SK-N-SH (cell line): ENCODE measurements at regions of chr3 and their contacts with region 1.

Region 1: GRCh38 chr3:142828703-142829305 is 60.1 kb downstream of the PCOLCE2 start:
- DNase-seq: peak; percentile 64
- H3K4me3 ChIP-seq: peak overlapping the region in 1 of 2 experiments; percentile 38; a peak in 1 of 4 replicates
- H3K27ac ChIP-seq: no peak overlapping the region
- H3K4me1 ChIP-seq: no peaks in the 10 kb centered on the region
- H3K27me3 ChIP-seq: no peaks in the 10 kb centered on the region
- CTCF ChIP-seq: peak; percentile 93
- EP300 ChIP-seq: no peak
- RAD21 ChIP-seq: peak; percentile 97

Region 2: DNA sequence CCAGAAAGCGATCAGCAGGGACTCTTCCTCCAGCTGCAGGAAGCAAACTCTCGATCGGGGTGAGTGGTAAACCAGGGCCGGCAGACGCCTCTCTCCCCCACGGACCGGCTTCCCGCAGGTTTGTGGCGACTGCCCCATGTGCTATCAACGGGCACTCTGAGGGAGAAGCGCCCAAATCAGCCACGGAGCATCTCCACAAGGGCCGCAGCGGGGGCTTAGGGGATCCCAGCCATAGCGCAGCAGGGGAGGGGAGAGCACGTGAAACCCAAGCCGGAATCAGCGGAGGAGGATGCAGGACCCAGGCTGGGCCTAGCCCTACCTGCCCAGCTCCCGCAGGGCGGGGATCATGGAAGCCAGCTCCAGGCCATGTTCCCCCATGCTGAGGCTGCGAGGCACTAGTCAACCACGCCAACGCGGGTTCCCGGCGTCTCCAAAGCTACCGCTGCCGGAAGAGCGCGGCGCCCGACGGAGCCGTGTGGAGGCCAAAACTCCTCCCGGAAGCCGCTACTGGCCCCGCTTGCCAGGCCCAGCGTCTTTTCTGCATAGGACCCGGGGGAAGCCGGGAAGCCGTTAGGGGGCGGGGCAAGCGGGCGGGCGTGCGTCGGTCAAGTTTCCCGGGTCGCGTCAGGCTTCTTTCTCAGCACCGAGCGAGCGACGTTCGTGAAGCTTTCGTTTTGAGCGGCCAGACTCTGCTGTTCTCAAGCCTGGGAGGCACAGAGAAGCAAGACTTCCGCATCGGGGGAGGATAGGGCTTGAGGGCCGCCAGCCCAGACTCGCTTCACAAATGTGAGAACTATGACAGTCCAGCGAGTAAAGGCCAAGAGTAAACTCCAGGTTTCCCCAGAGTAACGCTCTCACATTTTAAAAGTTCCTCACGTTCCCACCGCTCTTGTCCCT is 250.2 kb before region 1 on chr3 and contains the start of gene ATR:
- CTCF ChIA-PET with region 1: interaction called, 15 read pairs
- POLR2A ChIA-PET with region 1: no interaction called
- DNase-seq: peak; percentile 94
- H3K4me3 ChIP-seq: peak within 1 kb of the TSS; percentile 91 to 97
- H3K27ac ChIP-seq: peak within 1 kb of the TSS; percentile 92 to 93
- H3K4me1 ChIP-seq: peaks cover 4 to 7% of the 10 kb centered on the region in 2 experiments; a peak in 3 of 4 replicates
- H3K27me3 ChIP-seq: no peaks in the 10 kb centered on the region
- CTCF ChIP-seq: no peak
- EP300 ChIP-seq: peak in 1 of 2 experiments; percentile 62; a peak in 1 of 4 replicates
- RAD21 ChIP-seq: no peak
- polyA plus RNA-seq, gene ATR: 7.3 and 13.2 TPM in 2 replicates

Region 3: GRCh38 chr3:142808103-142808917 is 20.5 kb before region 1 on chr3:
- CTCF ChIA-PET with region 1: interaction called, 19 read pairs
- POLR2A ChIA-PET with region 1: no interaction called
- DNase-seq: no peak
- H3K4me3 ChIP-seq: no peak overlapping the region
- H3K27ac ChIP-seq: peak overlapping the region in 1 of 2 experiments; percentile 66; a peak in 2 of 4 replicates
- H3K4me1 ChIP-seq: no peaks in the 10 kb centered on the region
- H3K27me3 ChIP-seq: no peaks in the 10 kb centered on the region
- CTCF ChIP-seq: no peak
- EP300 ChIP-seq: no peak
- RAD21 ChIP-seq: no peak

Region 4: GRCh38 chr3:142844339-142844977 is 15.7 kb after region 1 on chr3:
- CTCF ChIA-PET with region 1: interaction called, 23 read pairs
- POLR2A ChIA-PET with region 1: no interaction called
- DNase-seq: peak; percentile 25
- H3K4me3 ChIP-seq: no peak overlapping the region
- H3K27ac ChIP-seq: no peak overlapping the region
- H3K4me1 ChIP-seq: no peaks in the 10 kb centered on the region
- H3K27me3 ChIP-seq: no peaks in the 10 kb centered on the region
- CTCF ChIP-seq: peak; percentile 54
- EP300 ChIP-seq: no peak
- RAD21 ChIP-seq: peak; percentile 44

Region 5: DNA sequence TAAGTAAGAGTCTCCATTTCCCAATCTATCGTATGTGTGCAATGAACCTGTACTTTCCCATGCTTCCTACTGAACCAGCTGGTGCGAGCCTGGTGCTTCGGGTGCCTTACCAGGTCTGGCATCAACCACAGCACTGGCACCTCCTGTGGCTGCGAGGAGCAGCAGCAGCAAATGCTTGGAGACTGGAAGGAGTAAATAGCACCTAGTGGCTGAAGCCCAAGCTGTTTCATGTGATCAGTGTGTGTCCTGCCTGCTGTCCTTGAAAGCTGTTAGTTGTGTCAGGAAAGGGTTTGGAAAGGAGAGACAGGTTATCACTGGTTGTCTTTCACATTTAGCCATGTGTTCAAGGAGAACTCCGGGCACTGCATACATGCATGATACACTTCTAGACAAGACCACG is 28.3 kb after region 1 on chr3:
- CTCF ChIA-PET with region 1: interaction called, 16 read pairs
- POLR2A ChIA-PET with region 1: no interaction called
- DNase-seq: peak; percentile 65
- H3K4me3 ChIP-seq: no peak overlapping the region
- H3K27ac ChIP-seq: no peak overlapping the region
- H3K4me1 ChIP-seq: peaks cover 2 to 15% of the 10 kb centered on the region in 2 experiments; a peak in 3 of 4 replicates
- H3K27me3 ChIP-seq: no peaks in the 10 kb centered on the region
- CTCF ChIP-seq: peak; percentile 59
- EP300 ChIP-seq: no peak
- RAD21 ChIP-seq: peak; percentile 53

Region 6: GRCh38 chr3:142904639-142905436 is 76.0 kb after region 1 on chr3:
- CTCF ChIA-PET with region 1: interaction called, 18 read pairs
- POLR2A ChIA-PET with region 1: no interaction called
- DNase-seq: no peak
- H3K4me3 ChIP-seq: no peak overlapping the region
- H3K27ac ChIP-seq: no peak overlapping the region
- H3K4me1 ChIP-seq: peaks cover 0 to 6% of the 10 kb centered on the region in 2 experiments; a peak in 1 of 4 replicates
- H3K27me3 ChIP-seq: no peaks in the 10 kb centered on the region
- CTCF ChIP-seq: peak; percentile 40
- EP300 ChIP-seq: no peak
- RAD21 ChIP-seq: peak; percentile 44

Region 7: GRCh38 chr3:142931222-142931621 is 102.4 kb after region 1 on chr3:
- CTCF ChIA-PET with region 1: no interaction called
- POLR2A ChIA-PET with region 1: no interaction called
- DNase-seq: peak; percentile 44
- H3K4me3 ChIP-seq: no peak overlapping the region
- H3K27ac ChIP-seq: no peak overlapping the region
- H3K4me1 ChIP-seq: no peaks in the 10 kb centered on the region
- H3K27me3 ChIP-seq: no peaks in the 10 kb centered on the region
- CTCF ChIP-seq: peak; percentile 27; the same call in 1 of the 2 replicates
- EP300 ChIP-seq: no peak
- RAD21 ChIP-seq: no peak

Region 8: DNA sequence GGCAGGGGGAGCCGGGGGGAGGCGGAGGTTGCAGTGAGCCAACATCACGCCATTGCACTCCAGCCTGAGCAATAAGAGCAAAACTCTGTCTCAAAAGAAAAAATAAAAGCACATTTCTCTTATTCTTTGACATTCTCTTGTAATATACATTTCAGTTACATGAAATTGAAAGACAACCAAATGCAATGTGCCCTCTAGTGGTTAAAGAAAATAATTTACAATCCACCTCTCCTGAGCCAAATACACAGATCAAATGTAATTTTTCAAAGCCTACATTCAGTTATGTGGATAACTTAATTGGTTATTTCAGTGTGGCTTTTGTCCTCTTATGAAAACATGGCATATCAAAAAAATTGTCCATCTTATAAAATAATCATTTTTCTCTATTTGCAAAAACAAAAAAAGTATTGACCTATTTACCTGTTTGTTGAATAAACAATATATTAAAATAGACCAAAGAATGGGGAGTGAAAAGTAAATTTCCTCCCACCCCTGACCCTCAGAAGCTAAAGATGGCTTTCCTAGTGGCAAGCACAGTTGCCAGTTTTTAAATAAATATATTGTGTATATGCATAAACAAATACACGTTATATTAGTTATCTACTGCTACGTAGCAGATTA is 158.4 kb after region 1 on chr3:
- CTCF ChIA-PET with region 1: interaction called, 88 read pairs
- POLR2A ChIA-PET with region 1: no interaction called
- DNase-seq: peak; percentile 52
- H3K4me3 ChIP-seq: no peak overlapping the region
- H3K27ac ChIP-seq: no peak overlapping the region
- H3K4me1 ChIP-seq: 0 out of 4 replicates have a peak, but pooled peaks cover 0 to 2% of the 10 kb centered on the region in 2 experiments
- H3K27me3 ChIP-seq: no peaks in the 10 kb centered on the region
- CTCF ChIP-seq: peak; percentile 84
- EP300 ChIP-seq: no peak
- RAD21 ChIP-seq: peak; percentile 74

Region 9: DNA sequence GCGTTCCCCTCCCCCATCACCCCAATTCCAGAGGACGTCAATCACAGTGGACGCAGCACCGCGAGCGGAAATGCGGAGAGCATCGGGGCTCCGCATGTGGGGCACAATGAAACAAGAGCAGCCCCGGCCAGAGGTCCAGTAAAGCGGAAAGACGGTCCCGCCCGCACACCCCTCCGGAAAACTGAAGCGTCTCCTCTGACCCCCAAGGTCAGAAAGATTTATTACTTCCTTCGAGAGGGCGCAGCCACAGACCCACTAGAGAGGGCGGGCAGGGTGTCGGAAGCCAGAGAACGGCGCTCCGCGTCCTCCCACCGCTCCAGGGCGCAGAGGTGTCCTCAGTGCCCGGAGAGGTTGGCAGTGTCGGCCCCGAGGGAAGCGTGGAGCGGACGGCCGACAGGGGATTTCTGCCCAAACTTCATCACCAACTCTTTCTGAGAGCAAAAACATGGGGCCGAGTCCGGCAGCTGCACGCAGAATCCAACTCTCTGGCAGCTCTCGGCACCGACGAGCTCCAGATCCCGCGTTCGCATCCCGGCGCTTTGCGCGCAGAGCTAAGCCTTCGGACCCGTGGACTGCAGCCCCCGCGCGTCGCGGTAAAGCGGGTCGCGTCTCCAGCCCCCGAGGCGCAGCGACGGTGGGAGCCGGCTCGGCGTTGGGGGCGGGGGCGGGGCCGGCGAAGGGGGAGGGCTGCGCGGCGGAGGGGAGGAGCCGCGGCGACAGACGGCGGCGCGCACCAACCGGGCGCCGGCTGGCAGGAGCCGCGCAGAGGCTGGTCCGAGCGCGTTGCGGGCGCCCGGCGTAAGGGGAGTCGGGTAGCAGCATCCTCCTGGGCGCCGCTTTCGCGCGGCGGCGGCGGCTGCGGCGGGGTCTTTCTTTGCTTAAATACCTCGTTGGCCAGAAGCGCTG is 290.5 kb after region 1 on chr3 and contains the start of gene CHST2:
- CTCF ChIA-PET with region 1: no interaction called
- POLR2A ChIA-PET with region 1: no interaction called
- DNase-seq: peak; percentile 94
- H3K4me3 ChIP-seq: peak within 1 kb of the TSS; percentile 61 to 99
- H3K27ac ChIP-seq: peak within 1 kb of the TSS in 1 of 2 experiments; percentile 66; a peak in 2 of 4 replicates
- H3K4me1 ChIP-seq: peaks cover 0 to 3% of the 10 kb centered on the region in 2 experiments; a peak in 1 of 4 replicates
- H3K27me3 ChIP-seq: peaks cover 34% of the 10 kb centered on the region; the same call in 1 of the 2 replicates
- CTCF ChIP-seq: no peak
- EP300 ChIP-seq: no peak
- RAD21 ChIP-seq: no peak
- polyA plus RNA-seq, gene CHST2: 1.1 and 1.6 TPM in 2 replicates

Region 10: GRCh38 chr3:143247073-143247472 is 418.3 kb after region 1 on chr3:
- CTCF ChIA-PET with region 1: no interaction called
- POLR2A ChIA-PET with region 1: no interaction called
- DNase-seq: no peak
- H3K4me3 ChIP-seq: no peak overlapping the region
- H3K27ac ChIP-seq: no peak overlapping the region
- H3K4me1 ChIP-seq: no peaks in the 10 kb centered on the region
- H3K27me3 ChIP-seq: no peaks in the 10 kb centered on the region
- CTCF ChIP-seq: no peak
- EP300 ChIP-seq: no peak
- RAD21 ChIP-seq: no peak